Activated CD4-positive, alpha-beta memory T cell treated with anti-CD3 and anti-CD28 coated beads, Interleukin-2, amount 10 ng/mL, durations not matched to agents 7 days and 5 days (primary cell): ENCODE measurements at regions of chr20 and their contacts with region 1.

Region 1: GRCh38 chr20:4082406-4083097 is 67.2 kb upstream of the RNF24 start:
- DNase-seq: peak; percentile 75
- H3K4me3 Mint-ChIP-seq: peak overlapping the region; percentile 28
- H3K27ac Mint-ChIP-seq: peak overlapping the region; percentile 88
- H3K4me1 Mint-ChIP-seq: peaks cover 55% of the 10 kb centered on the region
- H3K27me3 Mint-ChIP-seq: no peaks in the 10 kb centered on the region

Region 2: GRCh38 chr20:3889489-3890397 is 192.8 kb before region 1 on chr20:
- CTCF ChIA-PET with region 1: interaction called, 12 read pairs
- POLR2A ChIA-PET with region 1: interaction called, 32 read pairs
- DNase-seq: peak; percentile 56
- H3K4me3 Mint-ChIP-seq: peak overlapping the region; percentile 97
- H3K27ac Mint-ChIP-seq: peak overlapping the region; percentile 96
- H3K4me1 Mint-ChIP-seq: peaks cover 56% of the 10 kb centered on the region
- H3K27me3 Mint-ChIP-seq: no peaks in the 10 kb centered on the region

Region 3: GRCh38 chr20:4014031-4014474 is 68.5 kb before region 1 on chr20:
- CTCF ChIA-PET with region 1: interaction called, 26 read pairs
- POLR2A ChIA-PET with region 1: interaction called, 7 read pairs
- DNase-seq: peak; percentile 34
- H3K4me3 Mint-ChIP-seq: peak overlapping the region; percentile 87
- H3K27ac Mint-ChIP-seq: no peak overlapping the region
- H3K4me1 Mint-ChIP-seq: peaks cover 50% of the 10 kb centered on the region
- H3K27me3 Mint-ChIP-seq: no peaks in the 10 kb centered on the region

Region 4: GRCh38 chr20:4038047-4038459 is 44.5 kb before region 1 on chr20:
- CTCF ChIA-PET with region 1: interaction called, 6 read pairs
- POLR2A ChIA-PET with region 1: interaction called, 20 read pairs
- DNase-seq: peak; percentile 92
- H3K4me3 Mint-ChIP-seq: peak overlapping the region; percentile 74
- H3K27ac Mint-ChIP-seq: peak overlapping the region; percentile 95
- H3K4me1 Mint-ChIP-seq: peaks cover 29% of the 10 kb centered on the region
- H3K27me3 Mint-ChIP-seq: no peaks in the 10 kb centered on the region